AG04450 (cell line): ENCODE measurements at regions of chr5 and their contacts with region 1.

Region 1: DNA sequence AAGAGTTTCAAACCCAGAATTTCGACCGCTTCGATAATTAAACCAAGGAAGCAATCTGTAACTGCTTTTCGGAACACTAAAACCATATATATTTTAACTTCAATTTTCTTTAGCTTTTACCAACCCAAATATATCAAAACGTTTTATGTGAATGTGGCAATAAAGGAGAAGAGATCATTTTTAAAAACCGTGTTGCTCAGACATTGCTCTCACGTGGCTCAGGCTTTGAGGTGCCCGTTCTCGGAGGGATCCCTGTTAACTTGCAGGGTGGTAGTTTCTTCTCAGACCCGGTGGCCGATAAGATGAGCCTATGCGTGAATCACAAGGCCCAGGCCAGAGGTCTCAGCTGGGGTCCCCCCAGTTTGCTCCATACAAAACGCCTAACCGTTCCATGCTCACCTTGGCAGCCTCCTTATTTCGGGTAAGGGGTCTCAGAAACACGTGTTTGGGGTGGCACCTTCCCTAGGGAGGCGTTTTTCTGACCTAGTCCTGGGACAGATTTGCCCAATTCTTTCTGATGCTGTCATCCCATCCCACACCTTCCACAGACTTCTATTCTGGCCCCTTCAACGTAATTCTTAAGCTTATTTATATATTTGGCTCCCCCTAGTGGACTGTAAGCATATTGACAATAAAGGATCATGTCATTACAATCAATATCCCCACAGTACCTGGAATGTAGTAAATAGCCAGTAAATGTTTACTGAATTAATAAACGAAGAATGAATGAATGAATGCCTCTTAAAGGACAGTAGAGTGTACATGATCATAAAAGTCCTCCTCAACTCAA is 48.1 kb downstream of the THBS4 start:
- DNase-seq: peak; percentile 29
- H3K4me3 ChIP-seq: no peak overlapping the region
- H3K27ac ChIP-seq: no peak overlapping the region
- H3K27me3 ChIP-seq: peaks cover 4% of the 10 kb centered on the region
- CTCF ChIP-seq: peak; percentile 75

Region 2: GRCh38 chr5:79857714-79858409 is 225.4 kb before region 1 on chr5:
- CTCF ChIA-PET with region 1: interaction called, 12 read pairs
- POLR2A ChIA-PET with region 1: no interaction called
- DNase-seq: no peak
- H3K4me3 ChIP-seq: no peak overlapping the region
- H3K27ac ChIP-seq: no peak overlapping the region
- H3K27me3 ChIP-seq: peaks cover 6% of the 10 kb centered on the region
- CTCF ChIP-seq: peak; percentile 98

Region 3: DNA sequence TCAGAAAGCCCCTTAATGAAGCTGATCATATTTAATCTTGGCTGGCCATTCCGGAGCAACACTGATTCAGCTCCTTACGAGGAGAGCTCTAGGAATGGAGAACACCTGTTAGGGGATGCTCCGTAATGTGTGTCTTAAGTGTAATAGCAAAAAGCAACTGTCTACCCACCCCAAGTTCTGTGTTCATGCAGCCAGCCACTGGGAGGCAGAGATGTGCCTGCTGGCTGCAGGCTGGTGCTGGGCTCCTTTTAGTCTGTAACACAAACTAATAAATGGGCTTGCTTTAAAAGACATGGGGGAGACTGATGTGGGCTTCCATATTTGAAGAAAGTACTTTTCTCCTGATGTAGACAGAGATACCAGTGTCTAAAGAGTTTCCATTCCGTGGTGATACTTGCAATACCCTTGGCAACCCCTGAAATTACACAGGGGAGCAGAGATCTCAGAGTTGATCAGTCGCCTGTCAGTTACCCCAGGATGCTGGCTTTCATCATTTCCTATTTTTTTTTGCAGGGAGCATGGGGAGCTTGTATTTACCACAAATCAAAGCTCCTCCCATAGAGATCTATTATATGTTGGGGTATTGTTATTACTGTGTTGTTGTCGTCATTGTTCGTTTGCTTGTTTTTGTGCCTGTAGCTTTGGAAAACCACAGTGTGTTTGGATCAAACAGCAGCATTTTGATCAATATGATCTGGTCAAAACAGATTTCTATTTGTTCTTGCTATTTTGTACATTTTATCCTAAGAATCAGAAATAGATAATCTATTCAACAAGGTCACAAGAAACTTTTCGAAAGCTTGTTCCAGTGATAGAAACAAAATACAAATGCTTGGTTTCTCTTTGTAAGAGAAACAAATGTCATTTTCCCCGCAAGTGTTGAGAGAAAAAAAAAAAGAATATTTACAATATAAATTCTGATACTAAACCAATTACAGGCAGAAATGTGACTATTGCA is 158.1 kb before region 1 on chr5:
- CTCF ChIA-PET with region 1: interaction called, 67 read pairs
- POLR2A ChIA-PET with region 1: no interaction called
- DNase-seq: no peak
- H3K4me3 ChIP-seq: no peak overlapping the region
- H3K27ac ChIP-seq: no peak overlapping the region
- H3K27me3 ChIP-seq: peaks cover 11% of the 10 kb centered on the region
- CTCF ChIP-seq: peak; percentile 62

Region 4: GRCh38 chr5:80041527-80041926 is 41.8 kb before region 1 on chr5:
- CTCF ChIA-PET with region 1: interaction called, 16 read pairs
- POLR2A ChIA-PET with region 1: no interaction called
- DNase-seq: no peak
- H3K4me3 ChIP-seq: no peak overlapping the region
- H3K27ac ChIP-seq: no peak overlapping the region
- H3K27me3 ChIP-seq: peaks cover 26% of the 10 kb centered on the region
- CTCF ChIP-seq: no peak

Region 5: GRCh38 chr5:80069918-80070318 is 13.4 kb before region 1 on chr5:
- CTCF ChIA-PET with region 1: interaction called, 27 read pairs
- POLR2A ChIA-PET with region 1: interaction called, 3 read pairs
- DNase-seq: no peak
- H3K4me3 ChIP-seq: no peak overlapping the region
- H3K27ac ChIP-seq: no peak overlapping the region
- H3K27me3 ChIP-seq: no peaks in the 10 kb centered on the region
- CTCF ChIP-seq: no peak

Region 6: DNA sequence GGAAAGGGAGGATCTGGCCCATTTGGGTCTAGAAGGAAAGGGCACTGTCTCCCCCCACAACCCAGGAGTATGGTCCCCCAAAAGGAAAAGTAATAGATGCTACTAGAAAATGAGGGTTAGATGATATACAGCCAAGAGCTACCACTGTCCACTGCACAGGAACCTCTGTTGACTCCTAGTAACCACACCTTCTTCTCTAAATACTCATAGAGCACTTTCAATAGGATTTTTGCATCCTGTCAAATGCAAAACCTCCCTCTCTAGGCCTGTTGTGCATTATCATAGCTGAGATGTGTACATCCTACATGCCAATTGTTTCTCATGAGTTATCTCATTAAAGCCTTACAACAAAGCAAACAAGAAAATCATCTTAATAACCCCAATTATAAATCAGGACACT is 18.7 kb after region 1 on chr5:
- CTCF ChIA-PET with region 1: interaction called, 12 read pairs
- POLR2A ChIA-PET with region 1: no interaction called
- DNase-seq: no peak
- H3K4me3 ChIP-seq: no peak overlapping the region
- H3K27ac ChIP-seq: no peak overlapping the region
- H3K27me3 ChIP-seq: peaks cover 9% of the 10 kb centered on the region
- CTCF ChIP-seq: no peak

Region 7: GRCh38 chr5:80288177-80288576 is 204.9 kb after region 1 on chr5:
- CTCF ChIA-PET with region 1: no interaction called
- POLR2A ChIA-PET with region 1: no interaction called
- DNase-seq: no peak
- H3K4me3 ChIP-seq: no peak overlapping the region
- H3K27ac ChIP-seq: no peak overlapping the region
- H3K27me3 ChIP-seq: no peaks in the 10 kb centered on the region
- CTCF ChIP-seq: no peak

Region 8: DNA sequence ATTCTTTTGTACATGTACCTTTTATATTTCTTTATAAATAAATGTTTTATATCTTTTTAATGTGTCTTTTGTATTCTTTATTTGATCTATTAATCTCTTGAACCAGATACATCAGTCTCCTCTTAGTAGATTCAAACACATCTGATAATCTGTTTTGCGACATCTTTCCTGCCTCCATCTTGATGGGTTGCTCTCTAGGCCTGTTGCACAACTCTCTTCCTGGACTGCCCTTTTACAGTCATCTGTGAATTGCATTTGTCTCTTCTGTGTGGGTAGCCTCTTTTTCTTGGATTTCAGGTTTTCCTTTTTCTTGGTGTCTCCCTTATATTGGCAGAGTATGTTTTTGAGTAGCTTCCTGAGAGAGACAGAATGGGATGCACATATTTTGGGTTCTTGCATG is 330.8 kb after region 1 on chr5:
- CTCF ChIA-PET with region 1: no interaction called
- POLR2A ChIA-PET with region 1: no interaction called
- DNase-seq: no peak
- H3K4me3 ChIP-seq: no peak overlapping the region
- H3K27ac ChIP-seq: no peak overlapping the region
- H3K27me3 ChIP-seq: no peaks in the 10 kb centered on the region
- CTCF ChIP-seq: no peak

Region 9: DNA sequence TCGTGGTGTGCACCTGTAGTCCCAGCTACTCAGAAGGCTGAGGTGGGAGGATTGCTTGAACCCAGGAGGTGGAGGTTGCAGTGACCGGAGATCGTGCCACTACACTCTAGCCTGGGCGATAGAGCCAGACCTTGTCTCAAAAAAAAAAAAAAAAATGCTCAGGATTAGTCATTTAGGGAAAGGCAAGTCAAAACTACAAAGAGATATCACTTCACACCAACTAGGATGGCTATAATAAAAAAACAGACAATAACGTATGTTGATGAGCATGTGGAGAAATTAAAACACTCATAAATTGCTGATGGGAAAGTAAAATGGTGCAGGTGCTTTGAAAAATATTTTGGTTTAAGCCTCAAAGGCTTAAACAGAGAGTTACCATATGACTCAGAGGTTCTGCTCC is 493.1 kb after region 1 on chr5:
- CTCF ChIA-PET with region 1: no interaction called
- POLR2A ChIA-PET with region 1: no interaction called
- DNase-seq: no peak
- H3K4me3 ChIP-seq: no peak overlapping the region
- H3K27ac ChIP-seq: no peak overlapping the region
- H3K27me3 ChIP-seq: peaks cover 21% of the 10 kb centered on the region
- CTCF ChIP-seq: no peak